Motor neuron (in vitro differentiated cells): ENCODE measurements at regions of chr2 and their contacts with region 1.

Region 1: DNA sequence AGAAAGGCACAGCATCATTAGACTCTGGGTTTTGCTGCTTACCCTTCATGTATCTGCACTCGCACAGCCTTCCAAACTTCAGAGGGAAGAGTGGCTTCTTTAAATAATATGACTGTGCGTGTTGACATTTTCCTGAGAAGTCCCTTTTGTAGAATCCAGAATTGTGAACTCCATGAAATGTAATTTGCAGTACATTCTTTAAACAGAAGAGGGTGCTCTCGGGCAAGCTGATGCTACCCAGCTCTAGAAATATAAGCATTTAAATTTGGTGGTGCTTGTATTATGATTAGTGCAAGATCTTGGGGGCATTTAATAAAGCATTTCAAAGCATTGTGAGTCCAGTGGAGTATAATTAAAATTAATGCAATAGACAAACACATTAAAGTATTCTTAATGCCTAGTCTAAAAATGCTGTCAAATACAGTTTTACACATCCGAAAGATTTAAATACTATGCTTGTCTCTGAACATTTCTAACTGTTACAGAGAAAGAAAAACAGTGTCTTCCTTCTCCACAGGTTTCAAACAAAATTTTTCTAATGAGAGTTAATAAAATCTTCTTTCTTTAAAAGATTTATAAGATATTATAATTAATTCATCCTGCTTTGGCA is 17.3 kb upstream of the GTF2A1L start:
- ATAC-seq: peak in 6 of 8 experiments; percentile 16 to 56 (median 31)
- H3K4me3 ChIP-seq: no peak overlapping the region
- H3K27ac ChIP-seq: no peak overlapping the region
- H3K4me1 ChIP-seq: peaks cover 7 to 13% of the 10 kb centered on the region in 2 donors

Region 2: DNA sequence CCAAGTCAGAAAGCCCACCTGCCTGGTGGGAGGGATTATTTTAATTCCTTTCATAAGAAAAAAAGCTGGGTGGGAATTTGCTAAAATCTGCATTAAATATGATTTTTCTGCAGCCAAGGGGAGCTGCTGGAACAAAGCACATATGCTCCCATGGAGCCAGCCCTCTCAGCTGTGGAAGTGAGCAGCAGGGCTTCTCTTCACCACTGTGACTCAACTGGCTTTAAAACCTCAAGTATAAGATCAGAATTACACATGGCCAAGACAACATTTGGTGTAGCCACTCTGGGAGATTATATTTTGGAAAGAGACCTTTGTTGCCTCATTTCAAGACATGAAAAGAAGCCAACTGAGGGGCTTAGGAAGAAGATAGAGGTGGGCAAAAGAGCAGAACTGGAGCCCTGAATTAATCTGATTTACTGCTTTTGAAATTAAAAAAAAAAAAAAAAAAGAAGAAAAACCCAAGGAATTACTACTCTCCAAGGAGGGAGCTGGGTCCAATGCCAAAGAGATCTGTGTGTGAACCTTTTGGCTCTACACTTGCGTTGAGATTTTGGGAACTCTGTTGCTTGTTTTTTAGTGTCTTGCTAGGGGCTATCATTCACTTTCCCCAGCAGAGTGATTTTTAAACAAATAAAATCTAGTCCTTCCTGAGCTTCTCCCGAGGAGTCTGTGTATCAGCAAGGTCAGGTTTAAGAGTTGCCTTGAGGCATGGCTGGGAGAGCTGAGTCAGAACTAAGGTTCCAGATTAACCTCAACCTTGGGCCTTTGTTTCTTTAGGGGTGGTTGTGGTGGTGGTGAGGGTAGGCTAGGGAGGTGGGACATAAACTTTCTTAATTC is 149.2 kb after region 1 on chr2:
- in situ Hi-C with region 1: loop called in 1 of 9 experiments (anchors 25 kb)
- ATAC-seq: no peak
- H3K4me3 ChIP-seq: no peak overlapping the region
- H3K27ac ChIP-seq: no peak overlapping the region
- H3K4me1 ChIP-seq: peaks cover 12% of the 10 kb centered on the region in 2 donors

Region 3: GRCh38 chr2:48844417-48845155 is 244.3 kb after region 1 on chr2:
- in situ Hi-C with region 1: no loop called
- ATAC-seq: peak in 1 of 8 experiments; percentile 51
- H3K4me3 ChIP-seq: no peak overlapping the region
- H3K27ac ChIP-seq: no peak overlapping the region
- H3K4me1 ChIP-seq: no peaks in the 10 kb centered on the region

Region 4: GRCh38 chr2:50492477-50492851 is 1892.2 kb after region 1 on chr2:
- in situ Hi-C with region 1: loop called in 1 of 9 experiments (anchors 25 kb)
- ATAC-seq: peak; percentile 63 to 86 (median 79)
- H3K4me3 ChIP-seq: peak overlapping the region in 1 of 5 donors; percentile 15
- H3K27ac ChIP-seq: no peak overlapping the region
- H3K4me1 ChIP-seq: peaks cover 4 to 9% of the 10 kb centered on the region in 2 donors